Gastrocnemius medialis (tissue), 4 donors: ENCODE measurements at regions of chr3 and their contacts with region 1.

Region 1: DNA sequence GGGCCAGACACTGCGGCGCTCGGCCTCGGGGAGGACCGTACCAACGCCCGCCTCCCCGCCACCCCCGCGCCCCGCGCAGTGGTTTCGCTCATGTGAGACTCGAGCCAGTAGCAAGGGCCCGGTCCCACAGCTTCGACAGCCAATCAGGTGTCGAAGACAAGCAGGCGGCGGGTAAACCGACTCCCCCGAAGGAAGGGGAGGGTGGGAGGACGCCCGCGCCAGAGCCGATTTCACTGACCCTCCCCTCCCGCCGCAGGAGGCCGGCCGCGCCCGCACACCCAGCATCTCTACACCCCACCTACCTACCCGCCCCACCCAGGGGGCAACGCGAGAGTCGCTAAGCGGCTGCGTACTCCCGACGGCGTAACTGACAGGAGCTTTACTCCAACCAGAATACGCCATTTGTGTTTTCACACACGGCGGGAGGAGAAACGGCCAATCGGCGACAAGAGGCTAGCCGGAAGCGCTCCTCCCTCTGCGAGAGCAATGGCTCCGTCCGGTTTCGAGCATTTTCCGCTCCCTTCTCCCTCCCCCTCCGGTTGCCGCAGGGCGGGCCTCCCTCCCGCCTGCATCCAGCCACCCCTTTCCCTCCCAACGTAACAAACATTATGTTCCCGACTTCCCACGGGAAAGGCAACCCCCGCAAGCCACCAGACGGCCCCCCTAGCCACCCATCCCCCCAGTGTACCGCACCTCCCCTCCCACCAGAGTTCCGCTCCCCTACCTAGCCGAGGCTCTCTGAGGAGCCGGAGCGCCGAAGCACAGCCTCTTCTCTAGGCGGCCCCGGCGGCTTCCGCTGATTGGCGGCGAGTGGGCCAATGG is 504 bp upstream of the SETD5 start:
- DNase-seq: peak; percentile 99
- ATAC-seq: peak; percentile 79
- H3K4me3 ChIP-seq: peak overlapping the region; percentile 70 to 94 (median 71)
- H3K27ac ChIP-seq: peak overlapping the region; percentile 97 to 100 (median 99)
- H3K4me1 ChIP-seq: peaks cover 54 to 73% of the 10 kb centered on the region in 2 donors
- H3K27me3 ChIP-seq: no peaks in the 10 kb centered on the region
- CTCF ChIP-seq: no peak
- POLR2A ChIP-seq: peak; percentile 92 to 97

Region 2: DNA sequence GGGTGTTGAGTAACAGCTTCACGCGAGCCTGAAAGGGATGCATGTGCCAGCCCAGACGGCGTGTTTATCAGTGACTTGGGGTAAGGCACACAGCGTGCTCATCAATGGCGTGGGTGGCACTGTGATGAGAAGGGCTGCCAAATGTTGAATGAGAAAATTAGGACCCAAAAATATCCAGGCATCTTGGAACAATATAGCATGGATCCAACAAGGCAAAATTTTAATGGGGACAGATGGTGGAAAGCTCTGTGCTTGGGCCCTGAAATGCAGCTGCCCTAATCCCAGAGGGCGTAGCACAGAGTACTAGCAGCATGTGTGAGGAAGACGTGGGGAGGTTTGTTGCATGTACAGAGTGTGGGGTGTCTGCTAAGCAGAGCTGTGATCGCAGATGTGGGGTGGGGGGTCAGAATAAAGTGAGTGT is 801.2 kb before region 1 on chr3:
- in situ Hi-C with region 1: no loop called
- intact Hi-C with region 1: loop called (anchors 5 kb)
- DNase-seq: peak; percentile 45 to 49
- ATAC-seq: peak in 1 of 2 donors; percentile 16
- H3K4me3 ChIP-seq: no peak overlapping the region
- H3K27ac ChIP-seq: peak overlapping the region; percentile 86 to 94 (median 88)
- H3K4me1 ChIP-seq: peaks cover 85 to 91% of the 10 kb centered on the region in 2 donors
- H3K27me3 ChIP-seq: no peaks in the 10 kb centered on the region
- CTCF ChIP-seq: no peak
- POLR2A ChIP-seq: no peak

Region 3: DNA sequence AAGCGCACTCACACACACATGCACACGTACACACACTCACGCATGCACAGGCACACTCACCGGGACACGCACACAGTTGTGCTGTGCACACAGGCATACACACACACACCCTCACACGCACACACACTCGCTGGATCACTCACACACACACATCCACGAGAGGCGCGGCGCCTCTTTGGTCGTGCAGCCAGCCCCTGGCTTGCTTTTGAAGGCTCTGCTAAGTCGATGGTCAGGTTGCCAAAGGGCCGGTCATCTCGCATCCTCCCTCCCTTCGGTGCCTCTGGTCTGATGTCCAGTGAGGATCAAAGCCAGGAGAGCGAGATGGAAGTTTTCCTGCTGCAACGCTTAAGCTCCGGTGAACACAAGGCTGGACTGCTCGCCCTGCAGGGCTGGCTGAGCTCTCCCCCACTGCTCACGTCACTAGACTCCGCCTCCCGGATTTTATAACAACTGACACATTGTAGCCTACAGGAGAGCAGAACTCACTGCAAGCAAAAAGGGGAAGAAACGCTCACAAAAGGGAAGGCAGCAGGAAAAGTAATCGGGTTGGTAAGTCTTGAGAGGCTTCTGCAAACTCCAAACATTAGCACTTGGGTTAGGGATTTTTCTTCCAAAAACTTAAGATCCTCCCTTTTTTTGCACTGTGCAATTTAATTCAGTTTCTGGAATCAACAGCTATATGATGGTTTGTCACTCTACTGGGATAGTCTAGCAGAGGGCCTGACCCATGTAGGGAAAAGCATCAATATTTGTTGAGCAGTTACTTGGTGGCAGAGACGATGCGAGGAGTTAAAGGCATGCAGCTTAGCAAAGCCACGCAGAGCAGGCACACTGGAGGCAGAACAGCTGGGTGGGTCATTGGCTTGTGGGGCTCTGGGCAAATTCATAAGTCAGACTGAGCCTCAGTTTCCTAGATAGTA is 147.4 kb before region 1 on chr3 and contains the start of gene SRGAP3:
- in situ Hi-C with region 1: no loop called
- intact Hi-C with region 1: loop called (anchors 5 kb)
- DNase-seq: peak; percentile 77 to 91
- ATAC-seq: peak; percentile 70 to 76
- H3K4me3 ChIP-seq: peak within 1 kb of the TSS; percentile 42 to 56 (median 52)
- H3K27ac ChIP-seq: peak within 1 kb of the TSS; percentile 74 to 85 (median 78)
- H3K4me1 ChIP-seq: peaks cover 40 to 41% of the 10 kb centered on the region in 2 donors
- H3K27me3 ChIP-seq: no peaks in the 10 kb centered on the region
- CTCF ChIP-seq: peak in 4 of 5 experiments; percentile 30 to 44 (median 40)
- POLR2A ChIP-seq: peak; percentile 52
- total RNA-seq, gene SRGAP3: 1.3 to 2.3 (median 1.8) TPM

Region 4: GRCh38 chr3:9330166-9330703 is 66.7 kb before region 1 on chr3:
- in situ Hi-C with region 1: no loop called
- intact Hi-C with region 1: no loop called
- DNase-seq: no peak
- ATAC-seq: no peak
- H3K4me3 ChIP-seq: no peak overlapping the region
- H3K27ac ChIP-seq: no peak overlapping the region
- H3K4me1 ChIP-seq: no peaks in the 10 kb centered on the region
- H3K27me3 ChIP-seq: no peaks in the 10 kb centered on the region
- CTCF ChIP-seq: no peak
- POLR2A ChIP-seq: no peak

Region 5: DNA sequence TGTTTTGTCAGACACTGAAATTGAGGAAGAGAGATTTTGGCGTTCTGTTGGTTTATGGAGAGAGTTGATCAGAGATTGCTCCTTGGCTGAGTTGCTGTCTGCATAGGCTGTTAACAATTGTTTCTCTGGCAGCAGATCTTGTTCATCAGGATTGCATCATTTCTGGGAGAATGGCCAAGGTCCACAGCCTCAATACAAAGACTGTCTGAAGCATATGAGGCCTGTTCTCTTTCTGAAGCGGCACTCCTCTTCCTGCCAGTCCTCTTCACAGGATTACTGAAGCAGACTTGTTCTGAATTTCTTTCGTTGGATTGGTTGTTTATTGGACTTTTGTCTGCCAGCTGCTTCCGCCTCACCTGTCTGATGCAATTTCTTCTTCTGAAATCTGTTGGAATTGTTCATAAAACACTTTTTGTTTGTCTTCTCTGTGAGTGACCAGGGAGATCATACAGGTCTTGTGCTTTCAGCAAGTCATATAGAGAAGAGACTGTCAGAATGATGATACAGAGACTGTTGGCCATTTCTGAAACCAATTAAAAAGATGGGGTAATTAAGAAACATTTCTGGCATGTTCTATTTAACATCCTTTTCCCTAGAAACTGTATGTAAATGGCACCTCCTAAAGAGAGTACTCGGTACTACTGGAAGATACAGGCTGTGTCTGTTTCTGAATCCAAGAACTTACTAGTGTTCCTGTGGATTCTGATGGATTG is 26.0 kb after region 1 on chr3:
- in situ Hi-C with region 1: no loop called
- intact Hi-C with region 1: loop called (anchors 1 kb)
- DNase-seq: peak; percentile 82 to 85
- ATAC-seq: peak; percentile 98 to 99
- H3K4me3 ChIP-seq: peak overlapping the region in 1 of 4 donors; percentile 6
- H3K27ac ChIP-seq: peak overlapping the region; percentile 82 to 86 (median 84)
- H3K4me1 ChIP-seq: peaks cover 49 to 54% of the 10 kb centered on the region in 2 donors
- H3K27me3 ChIP-seq: no peaks in the 10 kb centered on the region
- CTCF ChIP-seq: peak; percentile 31 to 72 (median 53)
- POLR2A ChIP-seq: no peak

Region 6: DNA sequence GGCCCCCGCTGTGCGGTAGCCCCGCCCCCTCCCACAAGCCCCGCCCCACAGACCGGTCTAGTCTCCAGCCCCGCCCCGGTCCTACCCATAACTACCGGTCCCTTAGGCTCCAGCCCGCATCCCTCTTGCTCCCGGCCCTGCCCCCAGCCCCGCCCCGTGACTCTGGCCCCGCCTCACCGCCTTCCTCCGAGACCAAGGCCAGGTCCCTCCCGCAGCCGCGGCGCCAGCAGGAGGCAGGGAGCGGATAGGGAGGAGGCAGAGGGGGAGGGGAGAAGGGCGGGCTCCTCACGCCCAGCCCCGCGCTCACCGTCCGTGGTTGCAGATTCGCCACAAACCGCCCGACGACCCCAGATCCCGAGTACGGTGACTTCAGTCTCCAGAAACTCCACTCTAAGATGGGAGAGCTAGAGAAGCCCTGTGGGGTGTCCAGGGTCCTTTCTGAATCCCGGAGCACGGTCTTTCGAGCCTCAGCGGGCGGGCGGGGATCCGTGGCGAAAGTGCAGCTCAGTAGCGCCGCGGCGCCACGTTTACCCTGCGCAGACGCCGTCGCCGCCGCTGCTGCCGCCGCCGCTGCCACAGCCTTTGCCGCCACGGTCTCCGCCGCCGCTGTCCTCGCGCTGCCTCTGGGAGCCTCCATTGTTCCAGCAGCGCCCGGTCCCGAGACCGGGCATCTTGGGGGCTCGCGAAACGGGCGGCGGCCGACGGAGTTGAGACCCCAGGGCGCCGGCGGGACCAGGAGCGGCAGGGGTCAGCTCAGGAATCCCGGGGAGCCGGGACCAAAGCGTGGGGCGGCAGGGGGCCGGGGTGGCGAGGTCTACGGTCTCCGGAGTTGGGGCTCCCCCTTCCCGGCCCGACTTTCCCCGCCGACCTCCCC is 334.5 kb after region 1 on chr3 and contains the start of gene BRPF1:
- in situ Hi-C with region 1: no loop called
- intact Hi-C with region 1: loop called (anchors 2 kb)
- DNase-seq: peak; percentile 99 to 100
- ATAC-seq: peak; percentile 90 to 92
- H3K4me3 ChIP-seq: peak within 1 kb of the TSS; percentile 87 to 92 (median 90)
- H3K27ac ChIP-seq: peak within 1 kb of the TSS; percentile 90 to 99 (median 96)
- H3K4me1 ChIP-seq: peaks cover 16 to 21% of the 10 kb centered on the region in 2 donors
- H3K27me3 ChIP-seq: no peaks in the 10 kb centered on the region
- CTCF ChIP-seq: peak in 2 of 5 experiments; percentile 20 to 28
- POLR2A ChIP-seq: peak; percentile 27 to 58
- total RNA-seq, gene BRPF1: 12.0 to 19.5 (median 14.7) TPM

Region 7: GRCh38 chr3:10149226-10149625 is 752.3 kb after region 1 on chr3:
- in situ Hi-C with region 1: no loop called
- intact Hi-C with region 1: no loop called
- DNase-seq: no peak
- ATAC-seq: no peak
- H3K4me3 ChIP-seq: no peak overlapping the region
- H3K27ac ChIP-seq: no peak overlapping the region
- H3K4me1 ChIP-seq: peaks cover 3 to 19% of the 10 kb centered on the region in 2 donors
- H3K27me3 ChIP-seq: no peaks in the 10 kb centered on the region
- CTCF ChIP-seq: no peak
- POLR2A ChIP-seq: no peak

Region 8: DNA sequence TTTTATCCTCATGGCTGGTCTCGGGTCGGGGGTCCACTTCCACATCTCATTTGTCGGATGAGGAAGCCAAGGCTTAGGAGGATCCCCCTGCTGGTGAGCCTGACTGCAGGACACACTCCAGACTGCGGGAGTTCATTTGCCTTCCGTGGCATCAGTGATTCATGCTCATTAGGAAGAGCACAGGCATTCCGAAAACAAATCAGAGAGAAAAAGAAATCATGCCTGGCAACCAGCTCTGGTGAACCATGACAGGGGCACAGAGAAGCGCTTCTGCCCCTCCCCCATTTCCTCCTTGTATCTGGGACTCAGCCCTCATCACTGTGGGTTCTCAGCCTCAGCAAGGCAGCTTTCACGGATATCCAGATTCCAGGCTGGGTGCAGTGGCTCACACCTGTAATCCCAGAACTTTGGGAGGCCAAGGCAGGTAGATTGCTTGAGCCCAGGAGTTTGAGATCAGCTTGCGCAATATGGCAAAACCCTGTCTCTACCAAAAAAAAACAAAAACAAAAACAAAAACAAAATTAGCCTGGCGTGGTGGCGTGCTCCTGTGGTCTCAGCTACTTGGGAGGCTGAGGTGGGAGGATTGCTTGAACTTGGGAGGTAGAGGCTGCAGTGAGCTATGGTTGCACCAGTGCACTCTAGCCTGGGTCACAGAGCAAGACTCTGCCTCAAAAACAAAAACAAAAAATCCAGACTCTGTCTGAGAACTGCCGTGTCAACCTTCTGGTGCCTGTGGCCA is 796.2 kb after region 1 on chr3:
- in situ Hi-C with region 1: no loop called
- intact Hi-C with region 1: loop called (anchors 2 kb)
- DNase-seq: peak; percentile 41 to 55
- ATAC-seq: peak in 1 of 2 donors; percentile 12
- H3K4me3 ChIP-seq: no peak overlapping the region
- H3K27ac ChIP-seq: peak overlapping the region; percentile 91 to 99 (median 96)
- H3K4me1 ChIP-seq: peaks cover 75 to 89% of the 10 kb centered on the region in 2 donors
- H3K27me3 ChIP-seq: no peaks in the 10 kb centered on the region
- CTCF ChIP-seq: peak in 3 of 5 experiments; percentile 25 to 40 (median 35)
- POLR2A ChIP-seq: no peak